Heart left ventricle (tissue), 16 donors: ENCODE measurements at regions of chr2 and their contacts with region 1.

Region 1: GRCh38 chr2:44087036-44087713 is 81.5 kb upstream of the PPM1B start:
- DNase-seq: peak; percentile 80 to 92 (median 88)
- ATAC-seq: peak; percentile 95 to 97 (median 96)
- H3K4me3 ChIP-seq: peak overlapping the region in 10 of 12 donors; percentile 7 to 59 (median 44)
- H3K27ac ChIP-seq: peak overlapping the region in 9 of 12 donors; percentile 44 to 82 (median 55)
- H3K4me1 ChIP-seq: peaks cover 0 to 12% (median 5%) of the 10 kb centered on the region in 12 donors
- H3K27me3 ChIP-seq: no peaks in the 10 kb centered on the region
- CTCF ChIP-seq: peak; percentile 93 to 99 (median 98)
- POLR2A ChIP-seq: no peak

Region 2: DNA sequence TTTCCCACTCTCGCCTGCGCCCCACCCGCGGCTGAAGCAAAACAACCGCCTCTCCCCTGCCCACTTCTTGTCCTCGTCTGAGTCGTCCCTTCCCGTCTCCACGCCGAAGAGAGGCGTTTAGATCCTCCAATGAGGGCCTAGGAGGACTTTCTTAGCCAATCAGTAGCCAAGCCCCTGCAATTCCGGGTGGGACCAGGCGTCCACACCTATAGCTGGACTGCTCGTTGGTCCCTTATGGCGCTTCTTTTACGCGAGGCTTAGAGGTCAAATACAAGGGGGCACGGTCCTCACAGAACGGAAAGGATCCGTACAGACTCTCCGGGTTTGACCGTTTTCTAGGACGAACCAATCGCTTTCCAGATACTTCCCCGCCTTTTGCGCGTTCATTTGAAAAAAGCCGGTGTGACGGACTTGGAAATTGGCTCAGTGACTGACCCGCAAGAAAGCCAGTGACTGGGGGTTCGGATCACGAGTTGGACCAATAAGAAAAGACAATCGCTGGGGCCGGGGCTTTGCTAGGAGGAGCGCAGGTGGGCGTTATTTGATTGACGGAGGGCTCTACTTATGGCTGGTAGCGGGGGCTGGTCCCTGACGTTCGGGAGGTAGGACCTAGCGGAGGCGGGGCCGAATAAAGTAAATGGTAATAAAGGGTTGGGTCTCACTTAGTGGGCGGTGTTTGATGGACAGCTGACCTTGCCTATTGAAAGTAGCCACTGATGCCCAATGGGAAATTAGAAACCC is 80.9 kb after region 1 on chr2:
- intact Hi-C with region 1: loop called in 6 of 10 experiments (anchors 1 to 5 kb)
- DNase-seq: peak; percentile 96 to 100 (median 99)
- ATAC-seq: peak; percentile 93 to 95 (median 94)
- H3K4me3 ChIP-seq: peak overlapping the region; percentile 18 to 87 (median 58)
- H3K27ac ChIP-seq: peak overlapping the region; percentile 90 to 98 (median 94)
- H3K4me1 ChIP-seq: peaks cover 0 to 34% (median 20%) of the 10 kb centered on the region in 12 donors
- H3K27me3 ChIP-seq: no peaks in the 10 kb centered on the region
- CTCF ChIP-seq: no peak
- POLR2A ChIP-seq: peak in 1 of 2 donors; percentile 47

Region 3: GRCh38 chr2:44244129-44244871 is 157.1 kb after region 1 on chr2:
- intact Hi-C with region 1: loop called in 7 of 10 experiments (anchors 2 to 10 kb)
- DNase-seq: peak; percentile 47 to 65 (median 53)
- ATAC-seq: peak in 3 of 4 donors; percentile 64 to 82 (median 71)
- H3K4me3 ChIP-seq: peak overlapping the region in 10 of 12 donors; percentile 17 to 54 (median 40)
- H3K27ac ChIP-seq: no peak overlapping the region
- H3K4me1 ChIP-seq: peaks cover 0 to 12% (median 1%) of the 10 kb centered on the region in 12 donors
- H3K27me3 ChIP-seq: no peaks in the 10 kb centered on the region
- CTCF ChIP-seq: peak; percentile 56 to 77 (median 66)
- POLR2A ChIP-seq: no peak

Region 4: GRCh38 chr2:44324971-44325426 is 237.8 kb after region 1 on chr2:
- intact Hi-C with region 1: loop called in 1 of 10 experiments (anchors 10 kb)
- DNase-seq: peak in 4 of 5 donors; percentile 20 to 41 (median 35)
- ATAC-seq: peak; percentile 90 to 93 (median 90)
- H3K4me3 ChIP-seq: no peak overlapping the region
- H3K27ac ChIP-seq: peak overlapping the region in 10 of 12 donors; percentile 9 to 77 (median 56)
- H3K4me1 ChIP-seq: peaks cover 0 to 18% (median 8%) of the 10 kb centered on the region in 12 donors
- H3K27me3 ChIP-seq: no peaks in the 10 kb centered on the region
- CTCF ChIP-seq: no peak
- POLR2A ChIP-seq: no peak

Region 5: DNA sequence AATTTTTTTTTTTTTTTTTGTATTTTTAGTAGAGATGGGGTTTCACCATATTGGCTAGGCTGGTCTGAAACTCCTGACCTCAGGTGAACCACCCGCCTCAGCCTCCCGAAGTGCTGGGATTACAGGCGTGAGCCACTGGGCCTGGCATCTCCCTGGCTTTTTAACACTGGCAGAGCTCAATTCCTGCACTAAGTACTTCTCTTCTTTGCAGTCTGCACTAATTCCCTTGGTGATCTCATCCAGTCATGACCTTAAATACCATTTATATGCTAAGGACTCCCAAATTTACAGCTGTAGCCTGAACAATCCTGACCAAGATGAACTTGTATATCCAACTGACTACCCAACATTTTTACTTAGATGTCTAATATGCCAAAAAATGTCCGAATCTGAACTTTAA is 263.9 kb after region 1 on chr2:
- intact Hi-C with region 1: loop called in 2 of 10 experiments (anchors 5 to 10 kb)
- DNase-seq: no peak
- ATAC-seq: peak; percentile 13 to 66 (median 53)
- H3K4me3 ChIP-seq: no peak overlapping the region
- H3K27ac ChIP-seq: peak overlapping the region in 6 of 12 donors; percentile 4 to 35 (median 22)
- H3K4me1 ChIP-seq: peaks cover 0 to 70% (median 37%) of the 10 kb centered on the region in 12 donors
- H3K27me3 ChIP-seq: no peaks in the 10 kb centered on the region
- CTCF ChIP-seq: no peak
- POLR2A ChIP-seq: no peak

Region 6: DNA sequence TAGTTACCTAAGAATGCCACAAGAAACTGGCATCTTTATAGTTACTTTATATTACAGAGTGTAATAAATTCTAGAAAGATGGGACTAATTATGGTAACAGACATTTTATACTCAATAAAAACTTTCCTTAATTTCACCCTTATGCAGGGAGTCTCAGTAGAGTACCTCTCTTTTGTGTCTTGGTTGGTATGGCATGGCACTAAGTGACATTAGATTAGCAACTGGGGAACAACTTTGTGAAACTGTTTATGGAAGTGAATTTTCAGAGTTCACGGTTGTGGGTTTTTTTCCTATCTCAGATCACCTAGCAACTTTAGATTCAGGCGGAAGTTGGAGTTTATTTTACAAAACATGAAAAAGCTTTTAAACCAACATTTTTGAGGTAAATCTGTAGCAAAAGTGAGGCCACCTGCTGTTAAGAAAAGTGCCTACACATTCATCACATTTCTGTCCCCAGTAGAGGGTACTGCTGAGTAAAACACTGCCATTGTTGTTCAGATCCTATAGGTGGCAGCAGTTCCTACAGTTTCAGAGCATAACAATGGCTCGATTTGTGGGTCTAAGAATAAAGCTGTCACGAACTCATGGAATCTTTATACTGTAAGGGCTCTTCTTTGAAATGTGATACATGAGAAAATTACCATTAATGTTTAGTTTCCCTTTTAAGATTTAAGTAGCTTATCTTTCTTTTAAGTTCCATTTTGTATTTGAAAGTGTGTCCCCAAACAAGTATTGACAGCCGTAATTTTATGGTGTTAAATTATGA is 392.1 kb after region 1 on chr2:
- intact Hi-C with region 1: loop called in 1 of 10 experiments (anchors 2 kb)
- DNase-seq: peak in 2 of 5 donors; percentile 19 to 34
- ATAC-seq: peak; percentile 64 to 98 (median 90)
- H3K4me3 ChIP-seq: no peak overlapping the region
- H3K27ac ChIP-seq: no peak overlapping the region
- H3K4me1 ChIP-seq: no peaks in the 10 kb centered on the region
- H3K27me3 ChIP-seq: no peaks in the 10 kb centered on the region
- CTCF ChIP-seq: peak; percentile 94 to 100 (median 98)
- POLR2A ChIP-seq: no peak